ENCODE measurements at regions of chr13 and their contacts with region 1.

Region 1: DNA sequence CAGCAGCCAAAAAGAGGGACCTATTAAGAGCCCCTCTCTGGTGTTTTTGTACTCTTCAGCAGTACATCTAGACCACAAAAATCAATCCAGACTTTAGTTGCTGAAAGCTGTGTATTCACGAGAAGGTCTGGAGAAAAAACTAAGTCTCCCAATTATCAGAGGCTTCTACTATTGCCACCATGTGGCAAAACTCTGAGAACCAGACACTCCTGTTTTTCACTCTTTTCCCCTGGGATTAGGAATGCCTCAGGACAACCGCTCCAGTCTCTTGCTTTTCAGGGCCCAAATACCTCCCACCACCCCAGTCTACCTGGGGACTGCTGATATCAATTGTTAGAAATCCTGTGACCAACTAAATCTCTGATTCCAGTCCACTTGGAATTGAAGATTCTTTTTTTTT is 30.1 kb upstream of the OBI1 start:
- DNase-seq: no peak
- ATAC-seq: peak in 1 of 8 donors; percentile 7
- H3K4me3 ChIP-seq: no peak overlapping the region
- H3K27ac ChIP-seq: no peak overlapping the region
- H3K4me1 ChIP-seq: no peaks in the 10 kb centered on the region
- H3K27me3 ChIP-seq: peaks cover 0 to 25% (median 0%) of the 10 kb centered on the region in 7 donors
- CTCF ChIP-seq: peak in 7 of 9 donors; percentile 15 to 51 (median 42)

Region 2: DNA sequence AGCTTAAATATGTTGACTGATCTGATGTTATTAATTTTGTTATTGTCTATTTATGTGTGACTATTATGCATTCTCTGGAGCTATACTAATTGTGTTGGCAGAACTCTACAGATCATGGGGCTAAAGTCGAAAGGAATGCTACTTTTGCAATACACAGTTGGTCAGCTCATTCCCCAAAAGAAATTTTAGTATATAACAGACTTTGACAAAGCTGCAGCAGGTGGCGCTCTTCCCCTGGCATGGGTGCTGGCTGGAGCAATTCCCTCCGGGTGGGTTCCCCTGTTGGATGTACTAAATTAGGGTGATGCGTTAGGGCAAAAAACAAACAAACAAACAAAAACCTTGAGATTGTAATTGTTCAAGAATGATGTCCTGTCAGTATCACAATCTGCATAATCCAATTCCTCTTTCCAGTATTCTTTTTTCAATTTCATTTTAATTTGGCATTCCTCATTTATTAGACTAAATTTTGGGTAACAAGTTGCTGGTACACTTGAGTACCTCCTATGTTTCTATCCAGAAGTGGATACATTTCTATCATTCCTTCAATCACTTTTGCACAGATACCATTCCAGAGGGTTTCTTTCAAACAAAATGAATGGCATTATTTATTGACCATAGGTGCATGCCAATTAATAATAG is 447.6 kb before region 1 on chr13:
- intact Hi-C with region 1: loop called in 2 of 10 experiments (anchors 5 kb)
- DNase-seq: peak in 1 of 2 donors; percentile 14
- ATAC-seq: no peak
- H3K4me3 ChIP-seq: no peak overlapping the region
- H3K27ac ChIP-seq: no peak overlapping the region
- H3K4me1 ChIP-seq: no peaks in the 10 kb centered on the region
- H3K27me3 ChIP-seq: peaks cover 0 to 3% (median 0%) of the 10 kb centered on the region in 7 donors
- CTCF ChIP-seq: peak in 8 of 9 donors; percentile 5 to 59 (median 46)

Region 3: GRCh38 chr13:78317030-78317429 is 372.0 kb before region 1 on chr13:
- intact Hi-C with region 1: loop called in 1 of 10 experiments (anchors 10 kb)
- DNase-seq: no peak
- ATAC-seq: peak in 2 of 8 donors; percentile 41 to 71
- H3K4me3 ChIP-seq: no peak overlapping the region
- H3K27ac ChIP-seq: no peak overlapping the region
- H3K4me1 ChIP-seq: no peaks in the 10 kb centered on the region
- H3K27me3 ChIP-seq: peaks cover 0 to 3% (median 0%) of the 10 kb centered on the region in 7 donors
- CTCF ChIP-seq: peak in 8 of 9 donors; percentile 16 to 66 (median 50)

Measured in heart right ventricle (tissue), 16 donors.